Spleen (tissue), 13 donors: ENCODE measurements at regions of chr6 and their contacts with region 1.

Region 1: GRCh38 chr6:158789434-158789917 is 29.7 kb downstream of the EZR start:
- DNase-seq: no peak
- H3K4me3 ChIP-seq: peak overlapping the region in 1 of 8 donors; percentile 0
- H3K27ac ChIP-seq: peak overlapping the region; percentile 36 to 85 (median 65)
- H3K4me1 ChIP-seq: peaks cover 17 to 77% (median 55%) of the 10 kb centered on the region in 6 donors
- H3K27me3 ChIP-seq: no peaks in the 10 kb centered on the region
- CTCF ChIP-seq: peak in 1 of 11 experiments; percentile 10
- POLR2A ChIP-seq: no peak

Region 2: GRCh38 chr6:158518191-158519127 is 271.0 kb before region 1 on chr6:
- intact Hi-C with region 1: no loop called
- DNase-seq: no peak
- H3K4me3 ChIP-seq: peak overlapping the region in 5 of 8 donors; percentile 0 to 58 (median 13)
- H3K27ac ChIP-seq: peak overlapping the region in 2 of 8 donors; percentile 36 to 51
- H3K4me1 ChIP-seq: peaks cover 6 to 40% (median 17%) of the 10 kb centered on the region in 6 donors
- H3K27me3 ChIP-seq: peaks cover 0 to 72% (median 35%) of the 10 kb centered on the region in 7 donors
- CTCF ChIP-seq: peak in 8 of 11 experiments; percentile 12 to 57 (median 47)
- POLR2A ChIP-seq: no peak

Region 3: DNA sequence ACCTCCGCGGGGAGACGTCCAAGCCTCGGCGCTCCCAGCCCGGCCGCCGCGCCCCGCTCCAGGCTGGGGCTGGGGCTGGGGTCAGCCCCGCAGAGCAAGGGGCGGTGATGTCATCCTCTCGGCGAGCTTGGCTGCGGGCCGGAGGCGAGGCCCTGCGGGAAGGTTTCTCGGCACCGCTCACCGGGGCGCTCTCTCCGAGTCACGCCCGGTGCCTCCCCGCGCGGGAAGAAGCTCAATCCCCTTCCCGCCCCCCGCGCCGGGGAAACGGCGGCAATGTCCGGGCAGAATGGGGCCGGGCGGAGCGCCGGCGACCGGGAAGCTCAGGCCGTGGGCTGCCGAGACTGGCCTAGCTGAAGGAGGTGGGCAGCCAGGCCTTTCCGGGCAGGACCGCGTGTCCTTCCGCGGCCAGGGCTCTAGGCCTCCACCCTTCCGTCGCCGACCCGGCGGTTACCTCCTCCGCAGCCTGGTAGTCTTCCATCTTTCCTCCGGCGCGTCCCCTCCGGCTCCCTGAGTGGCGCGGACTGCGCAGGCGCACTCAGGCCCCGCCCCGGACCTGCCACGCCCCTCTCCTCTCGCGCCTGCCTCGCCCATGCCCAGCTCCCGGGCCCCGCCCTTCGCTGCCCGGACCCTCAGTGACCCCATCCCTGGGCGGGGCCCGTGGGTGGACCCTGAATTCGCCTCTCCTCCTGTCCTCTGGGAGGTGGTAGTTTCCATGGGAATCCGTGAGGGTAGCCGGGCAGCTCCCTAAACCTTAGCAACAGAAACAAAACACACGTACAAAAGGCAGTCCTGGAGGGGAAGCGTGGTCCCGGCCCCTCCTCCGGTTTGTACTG is 145.0 kb before region 1 on chr6 and contains the start of gene DYNLT1:
- intact Hi-C with region 1: no loop called
- DNase-seq: peak; percentile 97
- H3K4me3 ChIP-seq: peak within 1 kb of the TSS; percentile 79 to 96 (median 90)
- H3K27ac ChIP-seq: peak within 1 kb of the TSS; percentile 95 to 100 (median 99)
- H3K4me1 ChIP-seq: peaks cover 37 to 68% (median 61%) of the 10 kb centered on the region in 6 donors
- H3K27me3 ChIP-seq: no peaks in the 10 kb centered on the region
- CTCF ChIP-seq: peak in 2 of 11 experiments; percentile 14 to 26
- POLR2A ChIP-seq: peak; percentile 86 to 96 (median 93)
- total RNA-seq, gene DYNLT1: 61.3 to 91.3 (median 71.3) TPM

Region 4: DNA sequence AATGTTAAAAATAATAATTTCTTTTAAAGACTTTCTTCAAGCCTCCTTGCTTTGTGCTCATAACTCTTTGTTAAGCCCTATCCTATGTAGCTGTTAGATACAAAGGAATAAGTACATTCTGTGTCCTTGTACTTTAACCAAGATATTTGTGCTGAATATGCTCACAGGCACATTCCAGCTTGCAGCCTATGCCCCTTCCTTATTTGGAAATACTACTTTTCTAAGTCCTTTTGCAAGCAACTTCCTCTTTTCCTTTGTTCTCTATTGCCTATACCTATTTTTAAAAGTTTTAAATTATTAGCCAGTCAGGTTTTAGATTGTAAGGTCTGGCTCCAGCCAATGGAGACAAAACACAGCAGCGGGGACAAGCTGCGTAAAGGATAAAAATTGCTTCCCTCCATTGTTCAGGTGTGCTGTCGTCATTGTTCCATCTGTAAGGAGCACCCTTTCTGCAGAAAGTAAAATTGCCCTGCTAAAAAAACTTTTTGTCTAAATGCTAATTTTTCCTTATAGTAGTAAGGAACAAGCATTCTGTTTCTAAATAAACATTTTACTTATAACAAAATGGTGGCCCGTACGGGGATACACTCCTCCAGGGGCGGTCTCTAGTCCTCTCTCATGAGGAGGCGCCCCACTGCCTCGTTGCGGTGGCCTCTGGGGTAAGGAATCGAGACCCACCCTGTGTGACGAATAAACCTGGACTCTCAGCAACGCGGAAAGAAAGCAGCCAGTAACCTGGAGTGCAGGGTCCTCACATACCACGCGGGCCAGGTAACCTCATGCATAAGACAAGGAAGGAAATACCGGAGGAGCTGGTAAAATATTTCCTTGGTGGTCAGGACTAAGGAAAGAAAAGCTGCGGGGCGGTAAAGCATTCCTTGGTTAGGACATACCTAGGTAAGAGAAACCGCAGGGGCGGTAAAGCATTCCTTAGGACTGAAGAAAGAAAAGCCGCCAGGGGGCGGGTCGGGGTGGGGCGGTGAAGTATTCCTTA is 59.3 kb before region 1 on chr6:
- intact Hi-C with region 1: loop called (anchors 10 kb)
- DNase-seq: no peak
- H3K4me3 ChIP-seq: no peak overlapping the region
- H3K27ac ChIP-seq: no peak overlapping the region
- H3K4me1 ChIP-seq: no peaks in the 10 kb centered on the region
- H3K27me3 ChIP-seq: no peaks in the 10 kb centered on the region
- CTCF ChIP-seq: no peak
- POLR2A ChIP-seq: no peak

Region 5: DNA sequence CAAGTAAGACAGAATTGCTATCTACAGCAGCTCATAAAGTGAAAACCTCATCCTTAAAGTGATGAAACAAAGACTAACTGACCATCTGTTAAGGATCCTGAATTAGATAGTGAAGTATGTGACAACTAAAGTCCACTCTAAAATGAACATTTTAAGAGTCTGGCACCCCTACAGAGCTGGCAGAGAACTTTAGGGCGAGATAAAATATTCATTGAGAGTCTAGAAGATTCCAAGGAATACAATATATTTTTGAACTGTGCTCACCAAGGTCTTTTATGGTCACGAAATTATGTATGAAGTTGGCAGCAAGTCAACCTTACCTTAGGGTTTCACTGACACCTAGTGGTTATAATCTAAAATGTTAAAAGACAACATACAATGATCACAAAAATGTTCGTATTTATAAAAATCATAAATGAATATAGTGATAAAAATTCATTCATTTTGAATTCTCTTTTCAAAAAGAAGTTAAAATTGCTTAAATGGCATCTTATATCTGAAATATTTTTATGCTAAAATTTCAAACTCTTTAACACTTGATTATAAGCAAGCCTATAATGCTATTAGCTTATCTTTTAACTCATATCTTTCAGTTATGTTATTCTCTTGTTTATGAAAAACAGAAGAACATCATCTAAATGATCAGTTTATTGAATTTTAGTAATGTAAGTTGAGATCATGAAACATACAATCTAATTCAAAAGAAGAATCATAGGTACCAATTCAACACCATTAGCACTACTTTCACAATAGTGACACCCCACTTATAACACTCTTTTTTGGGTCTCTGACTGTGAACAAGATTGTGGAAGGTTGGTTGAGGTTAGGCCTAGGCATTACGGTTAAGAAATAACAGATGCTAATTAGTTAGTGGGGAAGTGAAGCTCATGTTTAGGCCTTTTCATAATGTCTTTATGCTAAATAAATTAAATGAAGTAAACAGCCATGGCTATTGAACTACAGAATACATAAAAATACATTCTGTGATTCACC is 183.1 kb after region 1 on chr6:
- intact Hi-C with region 1: loop called (anchors 10 kb)
- DNase-seq: no peak
- H3K4me3 ChIP-seq: no peak overlapping the region
- H3K27ac ChIP-seq: no peak overlapping the region
- H3K4me1 ChIP-seq: peaks cover 0 to 9% (median 6%) of the 10 kb centered on the region in 6 donors
- H3K27me3 ChIP-seq: no peaks in the 10 kb centered on the region
- CTCF ChIP-seq: peak in 9 of 11 experiments; percentile 37 to 67 (median 60)
- POLR2A ChIP-seq: no peak